WTC11 (cell line): ENCODE measurements at regions of chr2 and their contacts with region 1.

Region 1: DNA sequence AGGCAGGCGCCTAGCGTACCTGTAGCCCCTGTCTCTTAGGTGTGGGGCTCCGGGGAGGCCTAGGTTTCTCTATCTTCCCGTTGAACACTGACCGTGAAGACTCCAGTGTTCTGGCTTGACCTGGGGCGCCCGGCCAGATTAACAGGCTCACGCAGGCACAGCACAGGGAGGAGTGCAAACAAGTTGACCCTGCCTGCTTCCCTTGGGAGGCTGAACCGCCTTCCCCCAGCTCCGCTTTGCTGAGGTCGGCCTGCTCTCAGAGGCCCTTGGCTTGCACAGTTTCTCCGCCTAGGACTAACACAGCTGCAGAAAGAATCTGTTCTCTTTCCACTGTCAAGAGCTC is 566 bp downstream of the PCYOX1 start:
- DNase-seq: peak; percentile 42
- ATAC-seq: peak; percentile 4
- H3K4me3 Mint-ChIP-seq: peak overlapping the region; percentile 82
- H3K27ac Mint-ChIP-seq: no peak overlapping the region
- H3K4me1 Mint-ChIP-seq: peaks cover 15% of the 10 kb centered on the region
- H3K27me3 Mint-ChIP-seq: no peaks in the 10 kb centered on the region
- CTCF ChIP-seq: no peak

Region 2: GRCh38 chr2:69734035-69734631 is 524.4 kb before region 1 on chr2:
- CTCF ChIA-PET with region 1: no interaction called
- POLR2A ChIA-PET with region 1: no interaction called
- DNase-seq: no peak
- ATAC-seq: no peak
- H3K4me3 Mint-ChIP-seq: no peak overlapping the region
- H3K27ac Mint-ChIP-seq: no peak overlapping the region
- H3K4me1 Mint-ChIP-seq: peaks cover 7% of the 10 kb centered on the region
- H3K27me3 Mint-ChIP-seq: no peaks in the 10 kb centered on the region
- CTCF ChIP-seq: no peak

Region 3: DNA sequence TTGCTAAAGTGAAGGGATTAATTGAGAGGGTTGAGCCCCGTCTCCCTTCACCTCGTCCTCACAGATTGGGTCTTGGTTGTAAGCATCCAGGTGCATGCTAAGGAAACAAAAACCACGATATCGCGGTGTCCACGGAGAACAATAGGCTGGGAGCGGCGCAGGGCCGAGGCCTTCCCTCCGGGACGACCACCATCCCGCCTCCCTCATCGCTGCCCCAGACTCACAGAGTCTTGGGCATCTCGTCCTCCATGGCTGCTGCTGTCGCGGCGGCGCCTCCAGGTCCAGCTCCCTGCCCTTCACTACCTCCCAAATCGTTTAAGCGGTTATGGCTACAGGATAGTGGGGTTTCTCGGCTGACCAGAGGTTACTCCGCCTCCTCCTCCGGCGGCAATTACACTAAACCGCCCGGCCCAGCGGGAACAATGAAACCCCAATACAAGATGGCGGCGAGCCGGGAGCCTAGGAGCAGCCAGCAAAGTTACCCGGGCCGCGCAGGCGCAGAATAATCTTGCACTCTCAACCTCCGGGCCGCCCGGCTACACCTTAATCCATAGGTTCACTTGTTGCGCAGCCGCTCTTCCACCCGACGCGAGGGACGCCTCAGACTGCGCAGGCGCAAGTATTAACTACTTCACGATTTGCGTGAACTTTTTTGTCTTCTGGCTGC is 10.2 kb before region 1 on chr2 and contains the start of gene TIA1:
- CTCF ChIA-PET with region 1: interaction called, 4 read pairs
- POLR2A ChIA-PET with region 1: interaction called, 18 read pairs
- DNase-seq: peak; percentile 99
- ATAC-seq: peak; percentile 97
- H3K4me3 Mint-ChIP-seq: peak within 1 kb of the TSS; percentile 97
- H3K27ac Mint-ChIP-seq: peak within 1 kb of the TSS; percentile 100
- H3K4me1 Mint-ChIP-seq: peaks cover 34% of the 10 kb centered on the region
- H3K27me3 Mint-ChIP-seq: peaks cover 4% of the 10 kb centered on the region
- CTCF ChIP-seq: no peak
- total RNA-seq, gene TIA1: 150 to 178 TPM (median 176 TPM) in 3 replicates